K562 (cell line): ENCODE measurements at regions of chr21 and their contacts with region 1.

Region 1: DNA sequence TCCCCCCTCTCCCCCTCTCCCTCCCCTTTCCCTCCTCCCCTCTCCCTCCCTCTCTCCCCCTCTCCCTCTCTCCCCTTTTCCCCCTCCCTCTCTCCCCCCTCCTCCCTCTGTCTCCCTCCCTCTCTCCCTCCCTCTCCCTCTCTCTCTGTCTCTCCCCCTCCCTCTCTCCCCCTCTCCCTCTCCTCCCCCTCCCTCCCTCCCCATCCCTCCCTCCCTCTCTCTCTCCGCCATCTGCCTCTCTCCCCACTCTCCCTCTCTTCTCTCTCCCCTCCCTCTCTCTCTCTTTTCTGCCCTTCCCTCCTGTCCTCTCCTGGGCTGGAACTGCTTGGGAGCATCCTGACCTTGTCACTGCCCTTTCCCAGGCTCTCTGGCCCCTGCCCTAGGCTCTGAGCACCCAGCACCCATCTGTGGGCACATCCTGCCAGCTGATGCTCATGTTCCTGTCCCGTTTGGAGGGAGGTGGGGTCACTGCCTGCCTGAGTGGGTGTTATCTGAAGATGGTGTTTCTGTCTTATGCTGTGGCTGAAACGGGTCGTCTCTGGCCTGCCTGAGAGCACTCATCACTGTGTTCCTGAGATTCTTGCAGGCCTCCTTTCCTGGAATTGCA is 10.8 kb downstream of the FTCD start:
- DNase-seq: no peak
- ATAC-seq: no peak
- H3K4me3 ChIP-seq: no peak overlapping the region
- H3K27ac ChIP-seq: no peak overlapping the region; the same call in 2 of the 3 replicates
- H3K4me1 ChIP-seq: peaks cover 5 to 43% of the 10 kb centered on the region in 2 experiments; a peak in 4 of 5 replicates
- H3K27me3 ChIP-seq: peaks cover 6 to 13% of the 10 kb centered on the region in 2 experiments; a peak in 4 of 5 replicates
- CTCF ChIP-seq: no peak
- EP300 ChIP-seq: no peak
- POLR2A ChIP-seq: no peak
- RAD21 ChIP-seq: no peak

Region 2: GRCh38 chr21:46285761-46286496 is 141.4 kb after region 1 on chr21 and contains the start of gene YBEY:
- CTCF ChIA-PET with region 1: interaction called, 9 read pairs
- POLR2A ChIA-PET with region 1: no interaction called
- in situ Hi-C with region 1: no loop called
- intact Hi-C with region 1: loop called (anchors 10 kb)
- DNase-seq: peak; percentile 95 to 97 (median 96)
- ATAC-seq: peak; percentile 97
- H3K4me3 ChIP-seq: peak within 1 kb of the TSS; percentile 74
- H3K27ac ChIP-seq: peak within 1 kb of the TSS; percentile 94
- H3K4me1 ChIP-seq: peaks cover 18 to 23% of the 10 kb centered on the region in 2 experiments
- H3K27me3 ChIP-seq: no peaks in the 10 kb centered on the region
- CTCF ChIP-seq: peak; percentile 41 to 57 (median 57)
- EP300 ChIP-seq: peak; percentile 19; the same call in 1 of the 2 replicates
- POLR2A ChIP-seq: peak; percentile 95
- RAD21 ChIP-seq: peak; percentile 39 to 50
- polyA plus RNA-seq, gene YBEY: 6.4 to 9.4 TPM

Region 3: DNA sequence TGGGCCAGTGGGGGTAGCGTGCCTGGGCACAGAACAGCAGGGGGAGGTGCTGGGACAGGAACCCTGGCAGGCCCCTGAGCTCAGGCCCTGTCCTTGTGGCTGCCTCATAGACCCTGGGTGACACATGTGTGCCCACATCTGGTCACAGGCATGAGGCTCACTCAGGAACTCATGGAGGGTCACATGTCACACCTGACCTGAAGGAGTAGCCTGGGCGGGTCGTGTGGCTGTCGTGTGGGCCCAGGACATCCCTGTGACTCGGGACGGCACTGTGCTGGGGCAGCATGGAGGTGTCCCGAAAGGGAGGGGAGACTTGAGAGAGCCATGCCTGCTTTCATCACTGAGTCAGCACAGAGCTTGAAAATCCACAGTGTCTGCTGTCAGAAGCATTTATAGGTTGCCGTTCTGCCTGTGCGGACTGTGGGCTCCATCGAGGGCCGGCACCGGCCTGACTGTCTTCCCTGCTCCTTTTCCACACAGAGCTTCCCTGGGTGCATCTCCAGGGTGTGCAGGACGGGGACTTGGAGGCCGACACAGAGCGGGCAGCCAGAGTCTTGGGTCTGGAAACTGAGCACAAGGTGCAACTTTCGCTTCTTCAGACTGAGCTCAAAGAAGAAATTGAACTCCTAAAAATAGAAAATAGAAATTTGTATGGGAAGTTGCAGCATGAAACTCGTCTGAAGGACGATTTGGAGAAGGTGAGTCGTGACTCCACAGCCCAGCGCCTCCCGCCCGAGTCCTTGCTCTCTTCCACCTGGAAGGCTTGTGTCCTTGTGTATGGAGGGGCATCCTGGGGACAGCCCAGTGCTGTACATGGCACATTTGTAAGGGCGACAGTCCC is 212.1 kb after region 1 on chr21:
- CTCF ChIA-PET with region 1: no interaction called
- POLR2A ChIA-PET with region 1: no interaction called
- in situ Hi-C with region 1: no loop called
- intact Hi-C with region 1: no loop called
- DNase-seq: no peak
- ATAC-seq: no peak
- H3K4me3 ChIP-seq: no peak overlapping the region
- H3K27ac ChIP-seq: no peak overlapping the region
- H3K4me1 ChIP-seq: peaks cover 0 to 11% of the 10 kb centered on the region in 2 experiments; a peak in 1 of 5 replicates
- H3K27me3 ChIP-seq: no peaks in the 10 kb centered on the region
- CTCF ChIP-seq: no peak
- EP300 ChIP-seq: no peak
- POLR2A ChIP-seq: no peak
- RAD21 ChIP-seq: no peak